ENCODE measurements at regions of chr2 and their contacts with region 1.

Region 1: DNA sequence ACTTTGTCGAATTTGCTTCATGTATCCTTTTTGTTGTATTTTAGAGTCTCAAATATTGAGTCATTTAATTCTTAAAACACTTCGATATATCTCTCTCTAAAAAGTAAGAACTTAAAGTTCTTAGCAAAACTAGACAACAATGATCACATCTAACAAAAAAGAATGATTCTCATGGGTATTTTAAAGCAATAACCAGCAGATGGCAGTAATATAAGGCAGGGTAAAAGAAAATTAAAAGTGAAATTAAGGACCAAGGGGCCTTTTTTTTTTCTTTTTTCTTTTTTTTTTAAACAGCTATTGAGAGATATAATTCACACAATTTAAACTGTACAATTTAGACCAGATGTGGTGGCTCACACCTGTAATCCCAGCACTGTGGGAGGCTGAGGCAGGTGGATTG is 9.9 kb upstream of the AOX1 start:
- DNase-seq: no peak
- H3K4me3 ChIP-seq: no peak overlapping the region
- H3K27ac ChIP-seq: no peak overlapping the region
- H3K4me1 ChIP-seq: no peaks in the 10 kb centered on the region
- H3K27me3 ChIP-seq: no peaks in the 10 kb centered on the region
- CTCF ChIP-seq: peak in 2 of 3 experiments; percentile 18 to 43
- EP300 ChIP-seq: no peak
- POLR2A ChIP-seq: no peak

Region 2: DNA sequence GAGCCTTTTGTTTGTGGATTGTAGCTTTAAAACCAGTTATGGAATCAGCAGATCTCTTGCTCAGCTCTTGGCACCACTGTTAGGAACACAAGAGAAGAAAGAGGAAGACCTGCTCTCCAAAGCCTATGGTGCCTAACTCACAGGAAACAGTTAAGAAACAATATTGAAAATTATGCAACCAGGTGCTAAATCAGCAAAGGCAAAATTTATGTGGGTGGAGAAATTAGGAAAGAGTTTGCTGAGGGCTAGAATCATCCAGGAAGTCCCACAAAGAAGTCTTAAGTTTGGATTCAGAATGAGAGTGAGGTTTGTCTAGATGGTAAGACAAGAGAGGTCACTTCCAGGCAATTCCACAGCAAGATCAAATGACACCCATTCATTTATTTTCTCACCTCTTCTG is 59.3 kb after region 1 on chr2:
- intact Hi-C with region 1: no loop called
- DNase-seq: peak; percentile 31
- H3K4me3 ChIP-seq: no peak overlapping the region
- H3K27ac ChIP-seq: no peak overlapping the region
- H3K4me1 ChIP-seq: no peaks in the 10 kb centered on the region
- H3K27me3 ChIP-seq: no peaks in the 10 kb centered on the region
- CTCF ChIP-seq: no peak
- EP300 ChIP-seq: no peak
- POLR2A ChIP-seq: no peak

Region 3: GRCh38 chr2:200703127-200703925 is 127.4 kb after region 1 on chr2:
- intact Hi-C with region 1: loop called (anchors 2 kb)
- DNase-seq: no peak
- H3K4me3 ChIP-seq: no peak overlapping the region
- H3K27ac ChIP-seq: no peak overlapping the region
- H3K4me1 ChIP-seq: no peaks in the 10 kb centered on the region
- H3K27me3 ChIP-seq: peaks cover 0 to 8% (median 0%) of the 10 kb centered on the region in 4 donors
- CTCF ChIP-seq: peak; percentile 31 to 50 (median 43)
- EP300 ChIP-seq: no peak
- POLR2A ChIP-seq: no peak

Region 4: DNA sequence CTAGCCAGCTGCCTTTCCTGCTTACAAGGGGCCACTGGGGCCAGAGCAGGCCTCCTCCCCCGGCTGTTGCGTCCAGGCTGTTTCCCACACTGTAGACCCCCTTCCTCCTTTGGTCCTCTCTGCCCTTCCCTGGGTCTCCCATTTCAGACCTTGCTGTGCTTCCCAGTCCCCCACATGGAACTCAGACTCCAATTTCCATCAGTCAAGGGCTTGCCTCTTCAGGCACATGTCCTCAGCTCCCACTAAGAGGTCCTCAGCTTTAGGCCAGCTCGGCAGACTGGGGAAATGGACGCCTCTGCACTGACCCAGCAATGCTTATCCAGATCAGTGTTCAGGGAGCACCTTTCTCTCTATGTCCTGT is 137.7 kb after region 1 on chr2:
- intact Hi-C with region 1: no loop called
- DNase-seq: peak; percentile 80
- H3K4me3 ChIP-seq: peak overlapping the region in 1 of 4 donors; percentile 50
- H3K27ac ChIP-seq: peak overlapping the region; percentile 53 to 69 (median 62)
- H3K4me1 ChIP-seq: peaks cover 0 to 12% (median 5%) of the 10 kb centered on the region in 4 donors
- H3K27me3 ChIP-seq: no peaks in the 10 kb centered on the region
- CTCF ChIP-seq: no peak
- EP300 ChIP-seq: no peak
- POLR2A ChIP-seq: no peak

Region 5: DNA sequence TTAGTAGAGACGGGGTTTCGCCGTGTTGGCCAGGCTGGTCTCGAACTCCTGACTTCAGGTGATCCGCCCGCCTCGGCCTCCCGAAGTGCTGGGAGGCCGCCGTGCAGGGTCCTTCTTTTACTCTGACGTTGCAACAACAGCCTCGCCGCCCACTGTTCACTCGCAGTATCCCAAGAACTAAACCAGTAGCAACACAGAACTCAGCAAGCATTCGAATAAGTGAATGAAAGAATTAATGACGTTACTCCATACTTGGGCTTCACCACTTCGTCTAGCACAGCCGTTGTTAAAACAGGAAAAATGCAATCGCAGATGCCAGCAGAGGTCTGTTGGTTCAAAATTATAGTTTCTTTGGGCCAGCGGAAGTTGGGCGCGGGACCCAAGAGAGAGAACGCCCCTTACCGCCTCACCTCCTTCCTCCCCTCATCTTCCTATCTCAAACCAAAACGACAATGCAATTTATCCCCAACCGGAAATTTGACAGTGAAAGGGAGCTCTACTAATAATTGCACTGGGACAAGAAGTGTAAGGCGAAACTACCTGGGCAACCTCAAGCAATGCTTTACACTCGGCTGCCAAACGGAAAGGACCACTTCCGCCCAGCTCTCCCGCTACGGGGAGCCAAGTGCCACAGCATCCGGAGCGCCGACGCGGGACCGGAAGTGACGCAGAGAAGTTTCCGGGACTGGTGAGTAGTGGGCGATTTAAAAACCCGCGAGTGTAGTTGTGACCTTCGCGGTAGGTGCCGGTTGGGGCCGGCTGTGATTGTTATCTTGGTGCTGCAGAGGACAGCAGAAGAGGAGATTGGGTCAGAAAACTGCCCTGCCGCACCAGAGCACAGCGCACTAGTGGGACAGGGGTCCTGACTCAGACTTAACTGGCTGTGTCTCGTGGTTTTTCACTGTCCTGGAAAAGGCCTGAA is 313.0 kb after region 1 on chr2 and contains the starts of genes NIF3L1 and PPIL3:
- intact Hi-C with region 1: no loop called
- DNase-seq: peak; percentile 99
- H3K4me3 ChIP-seq: peak within 1 kb of the TSS; percentile 60 to 93 (median 76)
- H3K27ac ChIP-seq: peak within 1 kb of the TSS; percentile 91 to 94 (median 92)
- H3K4me1 ChIP-seq: peaks cover 13 to 41% (median 35%) of the 10 kb centered on the region in 4 donors
- H3K27me3 ChIP-seq: no peaks in the 10 kb centered on the region
- CTCF ChIP-seq: peak in 2 of 3 experiments; percentile 3 to 18
- EP300 ChIP-seq: no peak
- POLR2A ChIP-seq: peak; percentile 7
- total RNA-seq, gene NIF3L1: 11.8 to 21.1 (median 15.5) TPM
- total RNA-seq, gene PPIL3: 6.9 to 16.3 (median 13.4) TPM

Measured in esophagus muscularis mucosa (tissue), 4 donors.